Heart left ventricle (tissue), 16 donors: ENCODE measurements at regions of chr11 and their contacts with region 1.

Region 1: DNA sequence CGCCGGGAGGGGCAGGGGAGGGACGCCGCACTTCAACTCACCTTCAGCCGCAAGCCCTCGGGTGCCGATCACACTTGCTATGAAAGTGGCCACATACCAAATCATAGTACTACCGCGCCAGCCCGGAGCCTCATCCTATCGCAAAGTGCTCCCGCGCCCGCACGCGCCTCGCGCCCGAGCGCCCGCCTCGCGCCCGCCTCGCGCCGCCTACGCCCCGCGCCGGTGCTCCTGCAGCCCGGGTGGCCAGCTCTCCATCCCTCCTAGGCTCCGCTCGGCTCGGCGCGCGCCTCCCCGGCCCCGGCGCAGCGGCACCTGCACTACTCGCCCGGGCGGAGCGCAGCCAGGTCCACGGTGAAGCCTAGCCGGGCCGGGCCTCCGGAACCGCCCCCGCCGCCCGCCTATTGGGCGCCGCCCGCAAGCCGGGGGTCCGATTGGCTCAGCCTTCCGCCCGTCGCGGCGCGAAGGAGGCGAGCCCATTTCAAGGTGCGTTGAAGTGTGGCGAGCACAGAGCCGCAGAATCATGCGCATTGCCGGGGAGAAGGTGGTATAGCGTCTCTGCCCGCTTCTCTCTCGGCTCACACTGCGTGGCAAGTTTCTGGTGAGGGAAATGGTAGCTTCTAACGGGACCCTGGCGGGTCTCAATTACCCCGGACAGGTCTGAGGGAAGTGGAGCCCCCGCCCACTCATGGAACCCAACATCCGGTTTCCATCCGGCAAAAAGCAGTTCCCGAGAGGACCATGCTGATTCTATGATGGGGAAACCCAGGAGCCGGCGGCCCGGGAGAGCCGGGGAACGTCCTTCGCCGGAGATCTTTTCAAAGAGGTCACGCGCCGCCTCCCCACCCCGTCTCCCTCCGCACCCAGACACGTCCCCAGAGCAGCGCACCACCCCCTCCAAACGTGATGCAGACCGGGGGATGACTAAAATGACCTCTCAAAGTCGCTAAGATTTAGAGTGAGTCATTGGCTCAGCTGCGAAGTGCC is at the start of gene IGSF9B:
- DNase-seq: peak; percentile 89 to 92 (median 89)
- ATAC-seq: peak; percentile 81 to 89 (median 84)
- H3K4me3 ChIP-seq: peak within 1 kb of the TSS; percentile 28 to 90 (median 66)
- H3K27ac ChIP-seq: peak within 1 kb of the TSS; percentile 68 to 97 (median 92)
- H3K4me1 ChIP-seq: peaks cover 0 to 55% (median 28%) of the 10 kb centered on the region in 12 donors
- H3K27me3 ChIP-seq: peaks cover 0 to 48% (median 3%) of the 10 kb centered on the region in 9 donors
- CTCF ChIP-seq: peak in 1 of 12 donors; percentile 9
- POLR2A ChIP-seq: peak; percentile 53 to 85
- total RNA-seq, gene IGSF9B: 14.6 to 78.5 (median 43.7) TPM

Region 2: DNA sequence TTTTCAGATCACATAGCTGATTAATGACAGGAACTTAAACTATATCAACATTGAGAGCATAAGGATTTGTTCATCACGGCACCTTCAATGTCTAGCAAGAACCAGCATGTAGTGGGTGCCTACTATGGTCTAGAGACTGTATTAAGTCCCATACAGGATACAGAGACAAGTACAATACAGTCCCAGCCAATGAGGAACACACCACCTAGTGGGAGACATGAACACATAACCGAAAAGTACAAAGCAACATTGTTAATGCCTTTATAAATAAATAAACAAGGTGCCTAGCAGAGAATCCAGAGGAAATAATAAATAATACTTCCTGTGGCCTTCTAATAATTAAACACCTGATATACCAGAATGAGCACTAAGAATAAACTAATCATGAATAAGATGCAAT is 337.0 kb before region 1 on chr11:
- intact Hi-C with region 1: no loop called
- DNase-seq: no peak
- ATAC-seq: peak in 3 of 4 donors; percentile 49 to 75 (median 69)
- H3K4me3 ChIP-seq: no peak overlapping the region
- H3K27ac ChIP-seq: no peak overlapping the region
- H3K4me1 ChIP-seq: no peaks in the 10 kb centered on the region
- H3K27me3 ChIP-seq: peaks cover 0 to 5% (median 0%) of the 10 kb centered on the region in 9 donors
- CTCF ChIP-seq: peak in 11 of 12 donors; percentile 13 to 48 (median 34)
- POLR2A ChIP-seq: no peak

Region 3: DNA sequence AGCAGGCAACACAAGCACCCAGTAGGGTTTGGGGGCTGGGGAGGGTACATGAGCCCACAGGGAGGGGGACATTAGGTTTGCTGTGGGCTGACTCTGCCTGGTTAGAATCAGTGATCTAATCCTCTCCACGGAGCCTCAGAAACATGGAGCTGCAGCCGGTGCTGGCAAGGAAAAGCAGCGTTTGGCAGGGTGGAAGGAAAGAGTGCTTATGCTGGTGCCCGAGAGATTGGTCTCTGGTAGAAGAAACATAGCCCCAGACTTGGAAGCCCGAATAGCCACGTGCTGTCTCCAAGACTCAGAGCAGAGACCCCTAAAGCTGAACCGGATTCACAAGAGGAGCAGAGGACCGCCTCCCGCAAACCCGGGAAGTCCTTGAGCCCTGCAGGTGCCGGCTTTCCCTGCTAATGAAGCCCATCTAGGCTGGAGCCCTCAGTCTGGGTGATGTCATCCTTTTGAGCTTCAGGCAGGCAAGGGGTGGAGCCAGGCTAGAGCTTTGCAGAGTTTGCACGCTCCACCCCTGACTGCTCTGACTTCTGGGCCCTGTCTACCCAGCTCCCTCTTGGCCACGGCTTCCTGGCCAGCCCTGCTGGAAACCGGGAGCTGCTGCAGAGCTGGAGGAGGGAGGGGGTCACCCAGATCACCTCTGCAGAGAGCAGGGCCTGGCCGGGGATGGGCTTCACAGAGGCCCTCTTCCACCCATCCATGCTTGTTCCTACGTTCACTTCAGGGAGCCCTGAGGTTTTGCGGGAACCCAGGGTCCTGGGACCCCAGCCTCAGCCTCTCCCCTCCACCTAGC is 77.0 kb after region 1 on chr11:
- intact Hi-C with region 1: loop called in 5 of 10 experiments (anchors 5 to 10 kb)
- DNase-seq: peak; percentile 89 to 94 (median 90)
- ATAC-seq: peak; percentile 89 to 95 (median 92)
- H3K4me3 ChIP-seq: peak overlapping the region in 10 of 12 donors; percentile 19 to 52 (median 33)
- H3K27ac ChIP-seq: peak overlapping the region; percentile 76 to 98 (median 88)
- H3K4me1 ChIP-seq: peaks cover 3 to 61% (median 45%) of the 10 kb centered on the region in 12 donors
- H3K27me3 ChIP-seq: no peaks in the 10 kb centered on the region
- CTCF ChIP-seq: peak in 1 of 12 donors; percentile 4
- POLR2A ChIP-seq: no peak

Region 4: GRCh38 chr11:134223836-134224709 is 267.1 kb after region 1 on chr11 and contains the starts of genes NCAPD3 and VPS26B:
- intact Hi-C with region 1: loop called in 1 of 10 experiments (anchors 10 kb)
- DNase-seq: peak; percentile 97 to 98 (median 97)
- ATAC-seq: peak; percentile 91 to 97 (median 94)
- H3K4me3 ChIP-seq: peak within 1 kb of the TSS; percentile 64 to 95 (median 78)
- H3K27ac ChIP-seq: peak within 1 kb of the TSS; percentile 90 to 98 (median 94)
- H3K4me1 ChIP-seq: peaks cover 4 to 47% (median 35%) of the 10 kb centered on the region in 12 donors
- H3K27me3 ChIP-seq: no peaks in the 10 kb centered on the region
- CTCF ChIP-seq: no peak
- POLR2A ChIP-seq: peak; percentile 29 to 95
- total RNA-seq, gene NCAPD3: 9.4 to 18.8 (median 11.0) TPM
- total RNA-seq, gene VPS26B: 35.0 to 49.6 (median 37.8) TPM